Stomach (tissue), 19 donors: ENCODE measurements at regions of chr1 and their contacts with region 1.

Region 1: GRCh38 chr1:167076136-167076710 is 14.0 kb downstream of the GPA33 start:
- DNase-seq: no peak
- H3K4me3 ChIP-seq: no peak overlapping the region
- H3K27ac ChIP-seq: no peak overlapping the region
- H3K4me1 ChIP-seq: no peaks in the 10 kb centered on the region
- H3K27me3 ChIP-seq: no peaks in the 10 kb centered on the region
- CTCF ChIP-seq: no peak
- EP300 ChIP-seq: no peak
- POLR2A ChIP-seq: no peak

Region 2: GRCh38 chr1:167219646-167220536 is 143.7 kb after region 1 on chr1:
- intact Hi-C with region 1: loop called (anchors 10 kb)
- DNase-seq: peak; percentile 87 to 95
- H3K4me3 ChIP-seq: peak overlapping the region; percentile 66 to 97 (median 94)
- H3K27ac ChIP-seq: peak overlapping the region; percentile 84 to 99 (median 96)
- H3K4me1 ChIP-seq: peaks cover 4 to 33% (median 21%) of the 10 kb centered on the region in 4 donors
- H3K27me3 ChIP-seq: no peaks in the 10 kb centered on the region
- CTCF ChIP-seq: no peak
- EP300 ChIP-seq: no peak
- POLR2A ChIP-seq: peak in 2 of 4 donors; percentile 8 to 15

Region 3: DNA sequence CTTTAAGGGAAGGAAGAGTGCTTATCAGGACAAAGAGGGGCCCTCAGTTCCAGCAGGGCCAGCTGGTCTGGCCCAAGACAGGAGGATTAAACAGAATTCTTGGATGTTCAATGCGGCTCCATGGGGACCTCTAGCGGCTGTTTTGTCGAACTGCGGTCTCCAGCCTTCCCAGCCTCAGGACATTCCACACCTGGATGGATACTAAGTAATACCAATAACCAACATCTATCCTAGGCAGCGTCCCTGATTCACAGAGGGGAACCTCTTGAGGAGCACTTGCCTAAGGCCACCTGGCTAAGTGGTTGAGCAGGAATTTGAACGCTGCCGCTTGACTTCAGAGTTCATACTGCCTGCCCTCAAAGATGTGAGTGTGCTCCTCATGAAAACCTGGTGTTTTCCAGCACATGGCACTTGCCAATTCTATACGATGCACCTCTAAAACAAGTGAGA is 457.7 kb after region 1 on chr1:
- intact Hi-C with region 1: loop called (anchors 10 kb)
- DNase-seq: peak; percentile 76 to 90
- H3K4me3 ChIP-seq: no peak overlapping the region
- H3K27ac ChIP-seq: no peak overlapping the region
- H3K4me1 ChIP-seq: peaks cover 0 to 13% (median 6%) of the 10 kb centered on the region in 4 donors
- H3K27me3 ChIP-seq: no peaks in the 10 kb centered on the region
- CTCF ChIP-seq: peak in 5 of 7 experiments; percentile 45 to 88 (median 82)
- EP300 ChIP-seq: no peak
- POLR2A ChIP-seq: no peak